CD8-positive, alpha-beta memory T cell (primary cell): ENCODE measurements at regions of chr2 and their contacts with region 1.

Region 1: GRCh38 chr2:112924821-112925220 is 13.9 kb downstream of the IL37 start:
- DNase-seq: no peak
- H3K4me3 ChIP-seq: no peak overlapping the region
- H3K4me3 Mint-ChIP-seq: no peak overlapping the region
- H3K27ac ChIP-seq: no peak overlapping the region
- H3K27ac Mint-ChIP-seq: peak overlapping the region in 1 of 8 donors; percentile 78
- H3K4me1 ChIP-seq: no peaks in the 10 kb centered on the region
- H3K4me1 Mint-ChIP-seq: peaks cover 5 to 31% (median 12%) of the 10 kb centered on the region in 3 donors
- H3K27me3 ChIP-seq: no peaks in the 10 kb centered on the region
- H3K27me3 Mint-ChIP-seq: peaks cover 2 to 13% of the 10 kb centered on the region in 2 donors

Region 2: GRCh38 chr2:112884869-112885505 is 39.8 kb before region 1 on chr2:
- CTCF ChIA-PET with region 1: interaction called, 11 read pairs
- POLR2A ChIA-PET with region 1: no interaction called
- DNase-seq: peak; percentile 37 to 75 (median 52)
- H3K4me3 ChIP-seq: no peak overlapping the region
- H3K4me3 Mint-ChIP-seq: peak overlapping the region in 2 of 7 donors; percentile 5 to 20
- H3K27ac ChIP-seq: no peak overlapping the region
- H3K27ac Mint-ChIP-seq: peak overlapping the region in 4 of 8 donors; percentile 36 to 71 (median 50)
- H3K4me1 ChIP-seq: no peaks in the 10 kb centered on the region
- H3K4me1 Mint-ChIP-seq: peaks cover 7 to 16% (median 8%) of the 10 kb centered on the region in 3 donors
- H3K27me3 ChIP-seq: no peaks in the 10 kb centered on the region
- H3K27me3 Mint-ChIP-seq: no peaks in the 10 kb centered on the region

Region 3: DNA sequence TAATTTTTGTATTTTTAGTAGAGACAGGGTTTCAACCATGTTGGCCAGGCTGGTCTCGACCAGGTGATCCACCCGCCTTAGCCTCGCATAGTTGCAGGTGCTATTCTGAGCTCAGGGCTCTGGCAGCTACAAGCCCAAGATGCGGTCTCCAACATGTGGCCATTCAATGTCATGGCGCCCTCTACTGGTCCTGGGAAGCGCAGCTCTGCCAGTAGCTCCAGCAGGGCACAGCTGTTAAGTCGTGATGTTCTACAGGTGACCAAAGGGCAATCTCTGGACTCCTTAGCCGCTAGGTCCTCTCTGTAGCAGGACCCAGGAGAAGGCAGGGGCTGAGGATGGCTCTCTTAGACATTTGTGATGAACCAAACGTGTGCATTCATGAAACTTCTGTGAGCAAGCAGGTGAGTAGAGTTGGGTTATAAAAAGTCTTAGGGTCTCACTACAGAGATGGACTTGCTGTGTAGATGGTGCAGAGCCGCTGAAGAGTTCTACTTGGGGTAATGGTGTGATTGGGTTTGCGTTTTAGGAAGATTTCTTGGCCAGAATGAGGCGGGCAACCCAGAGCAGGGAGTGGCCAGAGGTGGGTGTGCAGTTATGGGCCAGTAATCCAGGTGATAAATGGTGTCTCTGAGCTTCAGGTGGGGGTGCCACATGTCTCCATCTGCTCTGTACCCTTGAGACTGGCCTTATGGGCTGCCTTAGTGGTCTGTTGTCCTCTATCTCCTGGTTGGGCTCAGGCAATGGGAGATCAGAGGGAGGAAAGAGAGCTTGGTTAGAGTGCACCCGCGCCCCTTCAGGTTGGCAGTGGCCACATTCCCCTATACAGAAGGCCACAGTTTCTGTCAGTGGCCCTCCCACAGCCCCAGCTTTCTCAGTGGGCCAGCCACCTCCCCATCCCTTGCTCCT is 17.2 kb after region 1 on chr2:
- CTCF ChIA-PET with region 1: interaction called, 14 read pairs
- POLR2A ChIA-PET with region 1: interaction called, 7 read pairs
- DNase-seq: peak; percentile 20 to 79 (median 44)
- H3K4me3 ChIP-seq: no peak overlapping the region
- H3K4me3 Mint-ChIP-seq: no peak overlapping the region
- H3K27ac ChIP-seq: no peak overlapping the region
- H3K27ac Mint-ChIP-seq: peak overlapping the region in 1 of 8 donors; percentile 8
- H3K4me1 ChIP-seq: no peaks in the 10 kb centered on the region
- H3K4me1 Mint-ChIP-seq: peaks cover 0 to 14% (median 8%) of the 10 kb centered on the region in 3 donors
- H3K27me3 ChIP-seq: no peaks in the 10 kb centered on the region
- H3K27me3 Mint-ChIP-seq: peaks cover 0 to 3% of the 10 kb centered on the region in 2 donors

Region 4: DNA sequence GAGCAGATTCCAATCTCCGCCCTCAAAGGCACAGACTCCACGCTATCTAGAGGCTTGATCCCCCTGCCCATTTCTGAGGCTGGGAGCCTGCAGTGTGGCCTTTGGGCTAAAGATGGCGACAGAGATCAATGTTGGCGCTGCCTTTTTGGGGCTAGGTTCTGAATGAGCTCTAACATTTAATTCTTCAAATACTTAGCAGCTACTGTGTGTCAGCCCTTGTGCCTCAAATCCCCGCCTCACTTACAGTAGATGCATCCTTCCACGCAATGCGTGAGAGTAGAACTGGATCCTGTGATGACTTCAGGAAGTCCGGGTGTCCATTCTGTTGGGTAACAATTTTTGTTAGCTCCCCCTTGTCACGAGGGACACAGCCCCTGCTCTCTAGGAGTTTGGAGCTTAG is 155.3 kb after region 1 on chr2:
- CTCF ChIA-PET with region 1: no interaction called
- POLR2A ChIA-PET with region 1: no interaction called
- DNase-seq: peak in 3 of 5 donors; percentile 5 to 19 (median 16)
- H3K4me3 ChIP-seq: no peak overlapping the region
- H3K4me3 Mint-ChIP-seq: no peak overlapping the region
- H3K27ac ChIP-seq: no peak overlapping the region
- H3K27ac Mint-ChIP-seq: peak overlapping the region in 1 of 8 donors; percentile 58
- H3K4me1 ChIP-seq: no peaks in the 10 kb centered on the region
- H3K4me1 Mint-ChIP-seq: peaks cover under 1 to 4% (median 3%) of the 10 kb centered on the region in 3 donors
- H3K27me3 ChIP-seq: no peaks in the 10 kb centered on the region
- H3K27me3 Mint-ChIP-seq: peaks cover 8 to 32% of the 10 kb centered on the region in 2 donors